ENCODE measurements at regions of chr1 and their contacts with region 1.

Region 1: DNA sequence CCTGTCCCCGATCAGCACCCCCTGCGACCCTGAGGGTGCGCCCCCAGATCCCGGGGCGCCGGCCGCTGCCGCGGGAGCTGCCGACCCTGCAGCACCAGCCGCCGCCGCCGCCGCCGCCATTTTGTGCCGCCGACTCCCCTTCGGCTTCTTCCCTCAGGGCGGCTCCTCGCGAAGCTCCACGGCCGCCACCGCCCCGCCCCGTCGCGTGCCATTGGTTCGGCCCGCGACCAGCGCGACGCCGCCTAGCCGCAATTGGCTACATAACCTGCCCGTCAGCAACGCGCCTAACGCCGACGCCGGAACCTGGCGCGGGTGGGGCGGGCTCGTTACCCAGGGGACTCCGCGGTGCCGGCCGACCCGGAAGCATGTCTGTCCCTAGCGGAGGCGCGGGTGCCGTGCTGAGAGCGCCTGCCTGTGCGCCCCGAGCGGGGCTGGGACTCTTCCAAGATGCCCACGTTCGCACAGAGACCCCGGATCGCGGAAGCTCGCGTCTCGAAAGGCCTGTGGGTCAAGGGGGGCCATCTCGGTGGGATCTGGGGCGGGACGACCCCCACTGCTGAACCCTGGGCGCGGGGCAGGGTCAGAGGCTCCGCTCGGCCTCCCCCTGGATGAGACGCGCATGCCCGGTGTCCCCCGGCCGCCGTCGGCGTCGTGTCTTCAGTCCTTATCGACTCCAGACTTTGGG is at the start of gene CCNL2:
- DNase-seq: peak; percentile 93
- ATAC-seq: peak; percentile 88
- H3K4me3 ChIP-seq: peak within 1 kb of the TSS; percentile 75 to 95 (median 93)
- H3K27ac ChIP-seq: peak within 1 kb of the TSS; percentile 85
- H3K4me1 ChIP-seq: peaks cover 53% of the 10 kb centered on the region
- H3K27me3 ChIP-seq: no peaks in the 10 kb centered on the region
- CTCF ChIP-seq: peak; percentile 63
- EP300 ChIP-seq: no peak
- POLR2A ChIP-seq: peak in 1 of 2 experiments; percentile 62; a peak in 2 of 4 replicates
- RAD21 ChIP-seq: 0 out of 2 replicates have a peak, but pooled peaks have one; percentile 6
- total RNA-seq, gene CCNL2: 19.6 and 105 TPM in 2 replicates

Region 2: GRCh38 chr1:1374929-1375662 is 24.2 kb before region 1 on chr1 and contains the start of gene AURKAIP1:
- CTCF ChIA-PET with region 1: no interaction called
- POLR2A ChIA-PET with region 1: interaction called, 35 read pairs
- in situ Hi-C with region 1: no loop called
- intact Hi-C with region 1: loop called (anchors 2 kb)
- DNase-seq: peak; percentile 99
- ATAC-seq: peak; percentile 90
- H3K4me3 ChIP-seq: peak within 1 kb of the TSS; percentile 75 to 99 (median 90)
- H3K27ac ChIP-seq: peak within 1 kb of the TSS; percentile 79
- H3K4me1 ChIP-seq: peaks cover 37% of the 10 kb centered on the region
- H3K27me3 ChIP-seq: no peaks in the 10 kb centered on the region; a peak in 1 of 5 replicates
- CTCF ChIP-seq: peak; percentile 77
- EP300 ChIP-seq: peak in 1 of 2 experiments; percentile 44; a peak in 2 of 4 replicates
- POLR2A ChIP-seq: peak; percentile 52 to 78
- RAD21 ChIP-seq: peak; percentile 71
- total RNA-seq, gene AURKAIP1: 161 and 175 TPM in 2 replicates

Region 3: GRCh38 chr1:1387098-1388077 is 11.9 kb before region 1 on chr1:
- CTCF ChIA-PET with region 1: no interaction called
- POLR2A ChIA-PET with region 1: interaction called, 43 read pairs
- in situ Hi-C with region 1: no loop called
- intact Hi-C with region 1: no loop called
- DNase-seq: no peak
- ATAC-seq: no peak
- H3K4me3 ChIP-seq: no peak overlapping the region
- H3K27ac ChIP-seq: no peak overlapping the region
- H3K4me1 ChIP-seq: peaks cover 23% of the 10 kb centered on the region
- H3K27me3 ChIP-seq: no peaks in the 10 kb centered on the region
- CTCF ChIP-seq: no peak
- EP300 ChIP-seq: no peak
- POLR2A ChIP-seq: no peak
- RAD21 ChIP-seq: no peak

Region 4: GRCh38 chr1:1427106-1427819 is 27.9 kb after region 1 on chr1:
- CTCF ChIA-PET with region 1: no interaction called
- POLR2A ChIA-PET with region 1: interaction called, 355 read pairs
- in situ Hi-C with region 1: no loop called
- intact Hi-C with region 1: no loop called
- DNase-seq: peak; percentile 35
- ATAC-seq: no peak
- H3K4me3 ChIP-seq: peak overlapping the region; percentile 58 to 83 (median 59); a peak in 3 of 6 replicates
- H3K27ac ChIP-seq: no peak overlapping the region
- H3K4me1 ChIP-seq: peaks cover 55% of the 10 kb centered on the region
- H3K27me3 ChIP-seq: no peaks in the 10 kb centered on the region
- CTCF ChIP-seq: no peak
- EP300 ChIP-seq: no peak
- POLR2A ChIP-seq: no peak
- RAD21 ChIP-seq: no peak

Region 5: GRCh38 chr1:1441002-1441888 is 41.9 kb after region 1 on chr1:
- CTCF ChIA-PET with region 1: no interaction called
- POLR2A ChIA-PET with region 1: interaction called, 355 read pairs
- in situ Hi-C with region 1: loop called (anchors 5 kb)
- intact Hi-C with region 1: no loop called
- DNase-seq: peak; percentile 41
- ATAC-seq: peak; percentile 60
- H3K4me3 ChIP-seq: peak overlapping the region in 2 of 3 experiments; percentile 13 to 66; a peak in 2 of 6 replicates
- H3K27ac ChIP-seq: no peak overlapping the region
- H3K4me1 ChIP-seq: peaks cover 56% of the 10 kb centered on the region
- H3K27me3 ChIP-seq: no peaks in the 10 kb centered on the region
- CTCF ChIP-seq: peak; percentile 96
- EP300 ChIP-seq: no peak
- POLR2A ChIP-seq: no peak
- RAD21 ChIP-seq: peak; percentile 93

Measured in HepG2 (cell line).